GM10248 (cell line): ENCODE measurements at regions of chr6 and their contacts with region 1.

Region 1: GRCh38 chr6:137661601-137662000 is 167.4 kb upstream of the OLIG3 start:
- DNase-seq: no peak
- CTCF ChIP-seq: peak; percentile 38

Region 2: GRCh38 chr6:137676888-137677287 is 15.3 kb after region 1 on chr6:
- CTCF ChIA-PET with region 1: interaction called, 11 read pairs
- POLR2A ChIA-PET with region 1: no interaction called
- DNase-seq: no peak
- CTCF ChIP-seq: no peak